ENCODE measurements at regions of chrX and their contacts with region 1.

Region 1: GRCh38 chrX:18390941-18391538 is 34.4 kb upstream of the CDKL5 start:
- DNase-seq: peak; percentile 85
- H3K4me3 ChIP-seq: no peak overlapping the region
- H3K27ac ChIP-seq: no peak overlapping the region
- H3K4me1 ChIP-seq: no peaks in the 10 kb centered on the region
- H3K27me3 ChIP-seq: no peaks in the 10 kb centered on the region
- CTCF ChIP-seq: peak; percentile 72 to 83 (median 77)
- POLR2A ChIP-seq: no peak

Region 2: DNA sequence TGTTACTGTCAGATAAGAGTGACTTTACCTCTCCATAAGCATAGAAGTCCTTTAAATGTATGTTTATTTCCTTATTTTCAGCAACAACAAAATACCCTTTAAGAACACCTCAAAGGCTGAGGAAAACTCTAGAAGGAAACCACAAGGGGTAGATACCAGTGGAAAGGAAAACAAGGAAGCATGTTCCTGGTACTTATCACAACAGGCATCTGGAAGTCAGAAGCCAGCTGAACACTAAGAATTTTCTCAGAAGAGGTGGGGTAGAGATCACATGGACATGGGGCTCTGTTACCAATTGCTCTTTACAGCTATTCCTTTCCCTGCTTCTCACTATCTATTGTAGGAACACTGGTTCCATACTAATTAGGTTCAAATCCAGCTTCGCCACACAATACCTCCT is 118.8 kb before region 1 on chrX:
- intact Hi-C with region 1: no loop called
- DNase-seq: no peak
- H3K4me3 ChIP-seq: no peak overlapping the region
- H3K27ac ChIP-seq: no peak overlapping the region
- H3K4me1 ChIP-seq: no peaks in the 10 kb centered on the region
- H3K27me3 ChIP-seq: no peaks in the 10 kb centered on the region
- CTCF ChIP-seq: no peak
- POLR2A ChIP-seq: no peak

Region 3: GRCh38 chrX:18309401-18309800 is 81.6 kb before region 1 on chrX:
- intact Hi-C with region 1: no loop called
- DNase-seq: no peak
- H3K4me3 ChIP-seq: no peak overlapping the region
- H3K27ac ChIP-seq: no peak overlapping the region
- H3K4me1 ChIP-seq: no peaks in the 10 kb centered on the region
- H3K27me3 ChIP-seq: no peaks in the 10 kb centered on the region
- CTCF ChIP-seq: no peak
- POLR2A ChIP-seq: no peak

Region 4: DNA sequence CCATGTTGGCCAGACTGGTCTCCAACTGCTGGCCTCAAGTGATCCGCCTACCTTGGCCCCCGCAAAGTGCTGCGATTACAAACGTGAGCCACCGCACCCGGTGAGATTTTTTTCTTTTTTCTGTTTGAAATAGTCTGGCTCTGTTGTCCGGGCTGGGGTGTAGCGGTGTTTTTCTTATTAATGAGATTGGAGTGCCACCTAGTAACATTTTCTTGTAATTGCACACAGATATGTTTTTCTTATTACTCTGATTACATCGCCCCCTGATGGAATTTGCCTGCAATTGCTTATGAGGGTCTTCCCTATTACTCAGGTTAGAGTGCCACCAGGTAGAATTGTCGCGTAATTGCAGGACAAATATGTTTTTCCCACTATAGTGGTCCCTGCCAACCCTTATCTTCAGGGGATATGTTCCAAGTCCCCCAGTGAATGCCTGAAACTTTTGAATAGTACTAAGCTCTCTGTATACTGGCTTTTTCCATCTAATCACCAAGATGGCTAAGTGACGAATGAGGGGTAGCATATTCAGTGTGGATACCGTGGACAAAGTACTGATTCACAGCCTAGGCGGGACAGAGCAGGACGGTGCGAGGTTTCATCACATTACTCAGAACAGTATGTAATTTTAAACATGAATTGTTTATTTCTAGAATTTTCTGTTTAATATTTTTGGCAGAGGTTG is 944.0 kb after region 1 on chrX:
- intact Hi-C with region 1: loop called (anchors 10 kb)
- DNase-seq: peak; percentile 46
- H3K4me3 ChIP-seq: no peak overlapping the region
- H3K27ac ChIP-seq: no peak overlapping the region
- H3K4me1 ChIP-seq: no peaks in the 10 kb centered on the region
- H3K27me3 ChIP-seq: no peaks in the 10 kb centered on the region
- CTCF ChIP-seq: peak in 2 of 3 experiments; percentile 15 to 57
- POLR2A ChIP-seq: no peak

Measured in testis (tissue), 5 donors.